ENCODE measurements at regions of chr11 and their contacts with region 1.

Region 1: GRCh38 chr11:73347067-73347466 is 29.1 kb upstream of the RELT start:
- DNase-seq: no peak
- H3K4me3 ChIP-seq: no peak overlapping the region
- H3K27ac ChIP-seq: no peak overlapping the region
- H3K4me1 ChIP-seq: peaks cover 6 to 19% of the 10 kb centered on the region in 2 donors
- H3K27me3 ChIP-seq: no peaks in the 10 kb centered on the region
- CTCF ChIP-seq: no peak
- POLR2A ChIP-seq: no peak

Region 2: DNA sequence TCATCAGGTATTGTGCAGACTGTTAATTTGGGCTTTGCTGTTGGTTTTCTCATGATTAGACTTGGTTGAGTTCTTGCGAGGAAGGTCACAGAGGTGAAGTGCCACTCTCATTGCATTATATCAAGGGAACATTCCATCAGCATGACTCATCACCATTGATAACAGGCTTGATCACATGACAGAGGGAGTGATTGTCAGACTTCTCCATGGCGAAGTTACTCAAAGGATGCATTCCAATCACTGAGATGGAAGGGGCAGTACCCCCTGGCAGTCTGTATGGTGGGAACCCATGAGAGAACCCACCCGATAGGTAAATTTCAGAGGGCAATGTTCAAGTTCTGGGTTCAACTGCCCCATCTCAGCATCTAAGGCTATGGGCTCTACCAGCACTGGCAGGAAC is 148.4 kb before region 1 on chr11:
- intact Hi-C with region 1: no loop called
- DNase-seq: no peak
- H3K4me3 ChIP-seq: no peak overlapping the region
- H3K27ac ChIP-seq: no peak overlapping the region
- H3K4me1 ChIP-seq: no peaks in the 10 kb centered on the region
- H3K27me3 ChIP-seq: no peaks in the 10 kb centered on the region
- CTCF ChIP-seq: no peak
- POLR2A ChIP-seq: no peak

Region 3: DNA sequence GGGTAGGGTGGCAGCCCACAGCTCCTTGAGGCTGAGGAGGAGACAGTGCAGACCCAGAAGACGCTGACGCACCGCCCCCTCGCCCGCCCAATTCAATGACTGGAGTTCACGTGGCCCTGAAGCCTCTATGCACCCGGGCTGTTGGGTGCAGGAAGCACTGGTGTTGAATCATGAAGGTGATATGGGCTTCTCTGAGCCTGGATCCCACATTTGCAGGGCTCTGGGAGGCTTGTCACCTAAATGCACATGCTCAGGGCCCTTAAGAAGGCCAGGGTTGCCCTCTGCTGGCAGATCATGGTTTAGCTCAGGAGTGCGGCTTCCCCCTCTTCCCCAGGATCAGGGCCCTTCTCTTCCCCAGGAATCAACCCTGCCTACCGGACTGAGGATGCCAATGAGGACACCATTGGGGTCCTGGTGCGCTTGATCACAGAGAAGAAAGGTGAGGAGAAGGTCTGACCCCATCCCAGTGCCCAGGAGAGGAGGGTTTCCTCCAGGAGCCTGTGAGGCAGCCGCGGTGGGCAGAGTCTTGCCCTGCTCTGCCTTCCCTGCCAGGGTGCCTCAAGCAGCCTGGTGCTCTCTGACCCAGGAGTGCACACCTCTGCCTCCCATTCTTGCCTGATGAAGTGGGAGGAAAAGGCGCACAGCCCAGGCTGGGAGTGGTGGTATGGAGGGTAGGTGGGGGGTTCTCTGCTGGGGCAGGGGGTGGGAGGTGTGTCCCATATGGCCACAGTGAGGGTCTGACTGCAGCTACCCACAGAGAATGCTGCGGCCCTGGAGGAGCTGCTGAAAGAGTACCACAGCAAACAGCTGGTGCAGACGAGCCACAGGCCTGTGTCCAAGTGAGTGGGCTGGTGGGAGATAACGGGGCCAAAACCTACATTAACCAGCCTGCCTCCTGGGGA is 46.7 kb after region 1 on chr11:
- intact Hi-C with region 1: loop called (anchors 5 kb)
- DNase-seq: peak; percentile 68 to 73
- H3K4me3 ChIP-seq: no peak overlapping the region
- H3K27ac ChIP-seq: no peak overlapping the region
- H3K4me1 ChIP-seq: no peaks in the 10 kb centered on the region
- H3K27me3 ChIP-seq: no peaks in the 10 kb centered on the region
- CTCF ChIP-seq: peak; percentile 54 to 86 (median 76)
- POLR2A ChIP-seq: no peak

Measured in uterus (tissue), 4 donors.